ENCODE measurements at regions of chr5 and their contacts with region 1.

Region 1: GRCh38 chr5:98130261-98131035 is 643.0 kb upstream of the RGMB start:
- DNase-seq: no peak
- ATAC-seq: no peak
- H3K4me3 Mint-ChIP-seq: no peak overlapping the region
- H3K27ac Mint-ChIP-seq: no peak overlapping the region
- H3K4me1 Mint-ChIP-seq: no peaks in the 10 kb centered on the region
- H3K27me3 Mint-ChIP-seq: no peaks in the 10 kb centered on the region

Region 2: GRCh38 chr5:97820146-97820545 is 310.3 kb before region 1 on chr5:
- CTCF ChIA-PET with region 1: no interaction called
- POLR2A ChIA-PET with region 1: interaction called, 12 read pairs
- intact Hi-C with region 1: no loop called
- DNase-seq: no peak
- ATAC-seq: no peak
- H3K4me3 Mint-ChIP-seq: no peak overlapping the region
- H3K27ac Mint-ChIP-seq: no peak overlapping the region
- H3K4me1 Mint-ChIP-seq: no peaks in the 10 kb centered on the region
- H3K27me3 Mint-ChIP-seq: no peaks in the 10 kb centered on the region